Adrenal gland (tissue), 19 donors: ENCODE measurements at regions of chr4 and their contacts with region 1.

Region 1: GRCh38 chr4:143531380-143531779 is 17.9 kb downstream of the SMARCA5 start:
- DNase-seq: no peak
- H3K4me3 ChIP-seq: no peak overlapping the region
- H3K27ac ChIP-seq: no peak overlapping the region
- H3K4me1 ChIP-seq: peaks cover 0 to 6% of the 10 kb centered on the region in 2 donors
- H3K27me3 ChIP-seq: no peaks in the 10 kb centered on the region
- CTCF ChIP-seq: peak in 1 of 6 experiments; percentile 31
- POLR2A ChIP-seq: no peak

Region 2: GRCh38 chr4:145148980-145149379 is 1617.6 kb after region 1 on chr4:
- intact Hi-C with region 1: loop called in 1 of 2 experiments (anchors 10 kb)
- DNase-seq: no peak
- H3K4me3 ChIP-seq: no peak overlapping the region
- H3K27ac ChIP-seq: no peak overlapping the region
- H3K4me1 ChIP-seq: peaks cover 11% of the 10 kb centered on the region in 2 donors
- H3K27me3 ChIP-seq: no peaks in the 10 kb centered on the region
- CTCF ChIP-seq: no peak
- POLR2A ChIP-seq: no peak